ENCODE measurements at regions of chr2 and their contacts with region 1.

Region 1: DNA sequence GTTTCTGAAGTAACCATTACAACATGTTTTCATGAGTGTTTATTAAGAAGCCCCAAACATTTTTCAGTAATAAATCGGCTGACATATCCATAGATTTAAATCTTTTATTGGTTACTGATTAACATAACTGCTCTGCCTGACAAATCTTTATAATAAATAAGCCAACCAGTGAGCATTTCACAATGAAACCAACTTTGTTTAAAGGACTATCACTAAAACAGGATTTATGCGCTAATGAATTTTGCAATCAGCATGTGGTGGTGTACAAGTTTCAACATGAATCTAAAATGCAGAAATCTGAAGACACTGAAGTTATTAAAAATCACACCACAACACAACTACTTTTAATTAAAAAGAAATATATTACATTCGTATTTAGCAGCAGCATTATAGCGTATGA is 166.7 kb downstream of the MEIS1 start:
- DNase-seq: peak in 1 of 5 donors; percentile 23
- H3K4me3 ChIP-seq: no peak overlapping the region
- H3K27ac ChIP-seq: no peak overlapping the region
- H3K4me1 ChIP-seq: no peaks in the 10 kb centered on the region
- H3K27me3 ChIP-seq: no peaks in the 10 kb centered on the region
- CTCF ChIP-seq: no peak

Region 2: GRCh38 chr2:66679442-66679841 is 77.8 kb after region 1 on chr2:
- intact Hi-C with region 1: loop called (anchors 10 kb)
- DNase-seq: peak in 4 of 5 donors; percentile 33 to 89 (median 62)
- H3K4me3 ChIP-seq: no peak overlapping the region
- H3K27ac ChIP-seq: no peak overlapping the region
- H3K4me1 ChIP-seq: peaks cover 0 to 5% (median 3%) of the 10 kb centered on the region in 3 donors
- H3K27me3 ChIP-seq: no peaks in the 10 kb centered on the region
- CTCF ChIP-seq: no peak

Region 3: DNA sequence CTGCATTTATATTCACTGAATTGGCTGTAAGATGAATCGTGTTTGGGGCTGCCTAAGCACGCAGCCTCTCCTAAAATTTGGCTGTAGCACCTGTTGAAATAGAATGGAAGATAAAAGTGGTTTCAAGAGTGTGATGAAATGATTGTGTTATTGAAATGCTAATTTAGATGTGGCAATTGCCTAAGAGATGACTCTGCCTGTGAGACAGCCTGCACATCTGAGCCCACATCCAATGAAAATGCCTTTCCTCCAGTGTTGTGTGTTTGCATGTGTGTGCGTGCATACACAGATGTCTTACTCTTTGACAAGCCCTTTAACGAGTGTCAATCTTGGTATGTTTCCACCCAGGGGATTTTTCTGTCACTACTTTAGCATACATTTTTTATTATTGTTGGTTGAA is 180.2 kb after region 1 on chr2:
- intact Hi-C with region 1: no loop called
- DNase-seq: no peak
- H3K4me3 ChIP-seq: no peak overlapping the region
- H3K27ac ChIP-seq: no peak overlapping the region
- H3K4me1 ChIP-seq: no peaks in the 10 kb centered on the region
- H3K27me3 ChIP-seq: no peaks in the 10 kb centered on the region
- CTCF ChIP-seq: no peak

Region 4: GRCh38 chr2:67221266-67221665 is 619.6 kb after region 1 on chr2:
- intact Hi-C with region 1: no loop called
- DNase-seq: no peak
- H3K4me3 ChIP-seq: no peak overlapping the region
- H3K27ac ChIP-seq: no peak overlapping the region
- H3K4me1 ChIP-seq: no peaks in the 10 kb centered on the region
- H3K27me3 ChIP-seq: no peaks in the 10 kb centered on the region
- CTCF ChIP-seq: no peak